Sigmoid colon (tissue), 7 donors: ENCODE measurements at regions of chr18 and their contacts with region 1.

Region 1: GRCh38 chr18:50356036-50356945 is 18.6 kb upstream of the SKA1 start:
- DNase-seq: no peak
- H3K4me3 ChIP-seq: no peak overlapping the region
- H3K27ac ChIP-seq: no peak overlapping the region
- H3K4me1 ChIP-seq: no peaks in the 10 kb centered on the region
- H3K27me3 ChIP-seq: no peaks in the 10 kb centered on the region
- CTCF ChIP-seq: no peak
- EP300 ChIP-seq: no peak
- POLR2A ChIP-seq: no peak

Region 2: DNA sequence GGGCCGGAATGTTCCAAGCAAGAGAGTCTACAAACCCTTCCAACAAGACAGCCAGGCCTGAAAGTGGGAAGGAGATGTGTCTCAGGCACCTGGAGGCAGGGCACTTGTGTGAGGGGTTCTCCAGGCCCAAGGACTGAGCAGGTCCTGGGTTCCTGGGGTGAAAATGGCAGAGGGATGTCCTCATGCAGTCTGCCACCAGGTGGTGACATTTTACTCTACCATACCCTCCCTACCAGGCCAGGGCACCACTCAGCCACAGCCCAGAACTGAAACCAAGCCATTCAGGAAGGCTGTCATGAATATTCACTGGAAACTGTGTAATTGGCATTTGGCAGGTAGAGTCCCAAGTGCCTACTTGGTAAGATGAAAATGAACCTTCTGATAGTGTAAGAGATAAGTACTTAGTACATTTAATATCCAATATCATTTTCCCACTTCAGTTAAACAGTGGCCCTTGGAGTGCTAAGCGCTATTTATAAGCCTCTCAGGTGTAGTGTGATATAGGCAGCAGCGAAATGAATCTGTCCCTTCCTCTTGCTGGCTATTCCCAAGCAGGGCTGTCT is 346.4 kb before region 1 on chr18:
- intact Hi-C with region 1: no loop called
- DNase-seq: no peak
- H3K4me3 ChIP-seq: no peak overlapping the region
- H3K27ac ChIP-seq: no peak overlapping the region
- H3K4me1 ChIP-seq: peaks cover 0 to 29% (median 26%) of the 10 kb centered on the region in 4 donors
- H3K27me3 ChIP-seq: no peaks in the 10 kb centered on the region
- CTCF ChIP-seq: peak in 1 of 4 experiments; percentile 30
- EP300 ChIP-seq: no peak
- POLR2A ChIP-seq: no peak

Region 3: GRCh38 chr18:50307738-50308470 is 48.4 kb before region 1 on chr18:
- intact Hi-C with region 1: loop called (anchors 5 kb)
- DNase-seq: peak; percentile 94
- H3K4me3 ChIP-seq: peak overlapping the region; percentile 26 to 52 (median 50)
- H3K27ac ChIP-seq: peak overlapping the region in 3 of 4 donors; percentile 33 to 45 (median 35)
- H3K4me1 ChIP-seq: peaks cover 0 to 11% (median 10%) of the 10 kb centered on the region in 4 donors
- H3K27me3 ChIP-seq: peaks cover 0 to 8% (median 0%) of the 10 kb centered on the region in 3 donors
- CTCF ChIP-seq: no peak
- EP300 ChIP-seq: no peak
- POLR2A ChIP-seq: no peak